Activated CD4-positive, alpha-beta memory T cell treated with anti-CD3 and anti-CD28 coated beads, Interleukin-2, amount 10 ng/mL, durations not matched to agents 7 days and 5 days (primary cell): ENCODE measurements at regions of chr6 and their contacts with region 1.

Region 1: DNA sequence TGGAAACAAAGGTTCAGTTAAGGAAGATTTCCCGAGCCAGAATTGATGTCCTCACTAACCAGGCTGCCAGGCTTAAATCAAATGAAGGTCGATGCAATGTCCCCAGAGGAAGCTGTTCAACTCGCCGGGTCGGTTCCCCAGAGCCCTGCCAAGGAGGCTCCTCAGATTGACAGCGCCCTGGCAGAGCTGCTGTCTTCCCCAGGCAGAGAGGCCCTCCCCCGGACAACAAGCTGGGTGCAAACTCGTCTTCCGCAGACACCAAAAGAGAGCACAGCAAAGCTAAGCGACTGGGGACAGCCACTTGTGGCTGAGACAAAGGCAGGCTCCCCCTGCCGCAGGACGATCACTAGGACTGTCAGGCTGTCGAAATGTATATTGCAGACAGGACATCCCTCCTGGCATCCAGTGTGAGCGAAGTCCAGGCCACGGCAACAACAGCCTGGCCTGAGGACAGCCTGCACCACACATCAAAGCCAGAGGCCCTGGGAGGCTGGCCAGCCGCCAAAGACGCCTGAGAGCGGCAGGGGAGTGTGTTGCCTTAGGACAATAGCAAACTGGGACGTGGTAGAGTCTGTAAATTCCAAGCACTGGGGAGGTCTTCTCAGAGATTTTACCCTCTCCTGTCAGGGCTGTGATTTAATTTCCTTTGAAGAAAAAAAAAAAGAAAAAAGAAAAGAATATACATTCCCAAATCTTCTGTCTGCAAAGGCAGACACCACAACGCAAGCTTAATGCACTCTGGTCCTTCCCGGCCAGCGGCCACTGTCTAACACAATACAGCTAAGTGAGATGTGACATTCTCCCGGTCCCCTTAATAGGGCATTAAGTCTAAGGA is 99.1 kb downstream of the HIVEP2 start:
- DNase-seq: peak; percentile 72
- H3K4me3 Mint-ChIP-seq: peak overlapping the region; percentile 79
- H3K27ac Mint-ChIP-seq: peak overlapping the region; percentile 91
- H3K4me1 Mint-ChIP-seq: peaks cover 90% of the 10 kb centered on the region
- H3K27me3 Mint-ChIP-seq: no peaks in the 10 kb centered on the region

Region 2: DNA sequence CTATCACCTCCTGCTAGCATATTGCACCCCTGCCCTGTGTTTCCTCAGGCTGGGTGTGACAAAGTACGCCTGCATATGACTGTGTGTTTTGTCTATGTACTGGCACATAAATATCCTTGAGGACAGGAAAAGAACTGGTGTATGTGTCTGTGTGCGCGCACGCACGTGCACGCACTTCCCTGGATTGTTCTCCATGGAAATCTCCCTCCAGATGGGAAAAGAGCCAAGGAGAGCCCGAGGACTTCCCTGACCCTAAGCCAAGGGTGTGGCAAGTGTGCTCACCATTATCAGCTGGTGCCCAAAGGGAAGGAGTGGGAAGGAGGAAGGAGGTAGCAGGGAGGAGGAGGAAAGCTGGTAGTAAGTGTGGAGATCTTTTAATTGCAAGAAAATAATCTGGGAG is 18.5 kb before region 1 on chr6:
- CTCF ChIA-PET with region 1: interaction called, 9 read pairs
- POLR2A ChIA-PET with region 1: interaction called, 18 read pairs
- DNase-seq: no peak
- H3K4me3 Mint-ChIP-seq: no peak overlapping the region
- H3K27ac Mint-ChIP-seq: no peak overlapping the region
- H3K4me1 Mint-ChIP-seq: peaks cover 25% of the 10 kb centered on the region
- H3K27me3 Mint-ChIP-seq: no peaks in the 10 kb centered on the region

Region 3: GRCh38 chr6:142857233-142857761 is 11.5 kb after region 1 on chr6:
- CTCF ChIA-PET with region 1: interaction called, 32 read pairs
- POLR2A ChIA-PET with region 1: interaction called, 202 read pairs
- DNase-seq: no peak
- H3K4me3 Mint-ChIP-seq: peak overlapping the region; percentile 69
- H3K27ac Mint-ChIP-seq: peak overlapping the region; percentile 98
- H3K4me1 Mint-ChIP-seq: peaks cover 82% of the 10 kb centered on the region
- H3K27me3 Mint-ChIP-seq: no peaks in the 10 kb centered on the region

Region 4: DNA sequence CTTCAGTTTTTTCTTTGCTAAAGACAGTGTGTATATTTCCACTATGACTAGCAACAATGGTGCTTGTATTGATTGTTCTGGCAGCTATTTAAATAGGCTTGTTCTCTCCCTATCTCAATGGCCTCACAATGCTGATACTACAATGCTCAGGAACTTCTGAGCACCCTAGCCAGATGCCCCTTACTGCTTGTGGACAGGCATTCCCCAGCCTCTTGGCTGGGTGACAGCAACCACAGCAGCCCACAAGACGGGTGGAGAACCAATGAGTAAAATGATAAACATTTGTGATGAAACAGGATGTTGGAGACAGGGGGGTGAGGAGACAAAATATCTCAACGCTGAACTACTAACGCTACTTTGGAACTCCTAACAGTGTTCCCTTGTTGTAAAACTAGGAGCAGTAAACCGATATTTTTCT is 56.8 kb after region 1 on chr6:
- CTCF ChIA-PET with region 1: interaction called, 7 read pairs
- POLR2A ChIA-PET with region 1: interaction called, 53 read pairs
- DNase-seq: peak; percentile 80
- H3K4me3 Mint-ChIP-seq: peak overlapping the region; percentile 58
- H3K27ac Mint-ChIP-seq: peak overlapping the region; percentile 93
- H3K4me1 Mint-ChIP-seq: peaks cover 51% of the 10 kb centered on the region
- H3K27me3 Mint-ChIP-seq: no peaks in the 10 kb centered on the region

Region 5: DNA sequence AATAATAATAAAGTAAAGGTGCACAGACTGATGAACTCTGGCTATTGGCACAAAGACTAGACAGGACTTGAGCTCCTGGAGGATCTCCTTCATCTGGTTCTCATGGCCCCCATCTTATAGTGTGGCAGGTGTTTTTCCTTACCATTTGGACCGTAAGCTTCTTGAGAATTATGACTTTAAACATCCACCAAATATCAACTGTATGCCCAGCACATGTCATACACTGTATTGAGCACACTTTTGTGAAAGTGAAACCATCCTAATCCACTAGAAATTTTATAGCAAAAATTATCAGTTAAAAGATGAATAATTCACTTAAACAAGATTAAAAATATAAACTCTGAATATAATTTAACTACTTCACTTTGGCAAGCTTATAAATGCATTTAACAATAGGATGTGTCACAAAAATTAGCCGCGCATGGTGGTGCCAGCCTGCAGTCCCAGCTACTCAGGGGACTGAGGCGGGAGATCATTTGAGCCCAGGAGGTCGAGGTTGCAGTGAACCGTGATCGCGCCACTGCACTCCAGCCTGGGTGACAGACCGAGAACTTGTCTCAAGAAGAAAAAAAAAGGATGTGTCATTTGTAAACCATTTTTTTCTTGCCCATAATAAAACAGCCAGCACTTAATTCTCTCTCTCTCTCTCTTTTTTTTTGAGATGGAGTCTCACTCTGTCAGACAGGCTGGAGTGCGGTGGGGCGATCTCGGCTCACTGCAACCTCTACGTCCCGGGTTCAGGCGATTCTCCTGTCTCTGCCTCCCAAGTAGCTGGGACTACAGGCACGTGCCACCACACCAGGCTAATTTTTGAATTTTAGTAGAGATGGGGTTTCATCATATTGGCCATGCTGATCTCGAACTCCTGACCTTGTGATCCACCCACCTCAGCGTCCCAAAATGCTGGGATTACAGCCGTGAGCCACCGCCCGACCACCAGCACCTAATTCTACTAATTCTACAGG is 90.0 kb after region 1 on chr6:
- CTCF ChIA-PET with region 1: interaction called, 3 read pairs
- POLR2A ChIA-PET with region 1: interaction called, 27 read pairs
- DNase-seq: peak; percentile 40
- H3K4me3 Mint-ChIP-seq: peak overlapping the region; percentile 80
- H3K27ac Mint-ChIP-seq: peak overlapping the region; percentile 87
- H3K4me1 Mint-ChIP-seq: peaks cover 81% of the 10 kb centered on the region
- H3K27me3 Mint-ChIP-seq: no peaks in the 10 kb centered on the region